ENCODE measurements at regions of chr19 and their contacts with region 1.

Region 1: GRCh38 chr19:38402967-38403861 is at the start of gene FAM98C:
- DNase-seq: peak; percentile 100
- CTCF ChIP-seq: peak; percentile 96

Region 2: GRCh38 chr19:37979547-37980082 is 423.6 kb before region 1 on chr19:
- in situ Hi-C with region 1: no loop called
- DNase-seq: no peak
- CTCF ChIP-seq: no peak

Region 3: GRCh38 chr19:38304866-38305429 is 98.3 kb before region 1 on chr19:
- in situ Hi-C with region 1: no loop called
- DNase-seq: no peak
- CTCF ChIP-seq: no peak

Region 4: DNA sequence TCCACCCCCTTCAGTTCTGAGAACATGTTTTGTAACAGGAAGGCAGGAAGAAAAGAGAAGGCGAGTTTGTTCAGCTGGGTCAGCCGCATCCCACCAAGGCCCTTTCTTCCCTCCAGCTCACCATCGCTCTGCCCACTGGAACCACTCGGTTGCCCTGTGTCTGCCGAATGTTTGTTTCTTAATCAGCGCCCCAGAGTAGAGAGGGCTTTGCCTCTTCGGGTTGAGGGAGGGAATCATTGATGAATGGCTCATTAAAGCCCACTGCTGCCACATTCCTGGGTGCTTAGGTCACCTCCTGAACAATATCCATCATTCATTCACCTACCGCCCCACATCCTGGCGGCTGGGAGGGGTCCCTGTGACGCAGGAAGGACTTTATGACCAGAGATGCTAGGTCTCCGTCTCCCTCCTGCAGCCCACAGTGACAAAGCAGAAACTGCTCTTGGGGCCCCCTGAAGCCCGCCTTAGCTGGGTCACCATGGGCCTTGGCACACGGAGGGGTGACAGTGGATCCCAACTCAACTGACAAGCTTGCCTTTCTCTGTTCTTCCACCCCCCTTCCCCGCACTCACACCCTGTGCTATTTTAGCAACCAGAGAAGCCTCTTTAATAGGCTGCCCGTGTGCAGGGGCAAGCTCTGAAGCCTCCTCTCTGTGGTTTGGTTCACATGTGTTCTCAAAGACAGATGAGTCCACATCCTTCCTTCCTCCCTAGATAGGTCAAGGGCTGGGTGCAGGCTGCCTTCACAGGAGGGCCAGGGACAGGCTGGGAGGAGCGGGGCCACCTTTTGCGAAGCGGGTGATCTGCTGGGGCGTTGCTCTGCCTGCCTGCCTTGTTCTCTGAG is 290.4 kb after region 1 on chr19:
- in situ Hi-C with region 1: no loop called
- DNase-seq: peak; percentile 70
- CTCF ChIP-seq: no peak

Region 5: GRCh38 chr19:38929929-38930775 is 526.9 kb after region 1 on chr19 and contains the start of gene SARS2:
- in situ Hi-C with region 1: loop called (anchors 25 kb)
- DNase-seq: peak; percentile 97
- CTCF ChIP-seq: peak; percentile 91